ENCODE measurements at regions of chr15 and their contacts with region 1.

Region 1: GRCh38 chr15:74540761-74541493 is at the start of gene ARID3B:
- DNase-seq: peak; percentile 99
- H3K4me3 Mint-ChIP-seq: peak within 1 kb of the TSS; percentile 97
- H3K27ac Mint-ChIP-seq: peak within 1 kb of the TSS; percentile 90
- H3K4me1 Mint-ChIP-seq: peaks cover 46% of the 10 kb centered on the region
- H3K27me3 Mint-ChIP-seq: no peaks in the 10 kb centered on the region
- total RNA-seq, gene ARID3B: 14.2 to 15.9 TPM

Region 2: GRCh38 chr15:73991726-73992593 is 549.0 kb before region 1 on chr15 and contains the start of gene STOML1:
- CTCF ChIA-PET with region 1: no interaction called
- intact Hi-C with region 1: loop called (anchors 1 kb)
- DNase-seq: peak; percentile 95
- H3K4me3 Mint-ChIP-seq: peak within 1 kb of the TSS; percentile 95
- H3K27ac Mint-ChIP-seq: peak within 1 kb of the TSS; percentile 83
- H3K4me1 Mint-ChIP-seq: peaks cover 49% of the 10 kb centered on the region
- H3K27me3 Mint-ChIP-seq: no peaks in the 10 kb centered on the region
- total RNA-seq, gene STOML1: 8.7 to 9.5 TPM

Region 3: DNA sequence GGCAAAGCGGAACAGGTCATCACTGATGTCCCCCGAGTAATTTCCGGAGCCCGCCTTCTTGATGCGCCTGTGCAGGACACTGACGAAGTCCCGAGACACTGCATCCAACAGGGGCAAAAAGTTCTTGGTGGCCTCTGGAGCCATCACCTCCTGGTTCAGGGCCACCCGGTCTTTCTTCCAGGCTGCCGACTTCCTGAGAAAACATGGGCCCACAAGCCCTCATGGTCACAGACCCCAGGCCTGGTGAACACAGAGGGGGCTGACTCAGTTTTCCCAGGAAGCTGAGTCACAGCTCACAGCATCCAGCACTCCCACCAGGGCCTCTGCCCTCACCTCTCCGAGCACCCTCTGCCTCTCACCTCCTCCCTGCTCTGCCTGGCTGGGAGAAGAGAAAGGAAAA is 195.9 kb before region 1 on chr15:
- CTCF ChIA-PET with region 1: no interaction called
- intact Hi-C with region 1: no loop called
- DNase-seq: no peak
- H3K4me3 Mint-ChIP-seq: no peak overlapping the region
- H3K27ac Mint-ChIP-seq: no peak overlapping the region
- H3K4me1 Mint-ChIP-seq: peaks cover 2% of the 10 kb centered on the region
- H3K27me3 Mint-ChIP-seq: no peaks in the 10 kb centered on the region

Region 4: DNA sequence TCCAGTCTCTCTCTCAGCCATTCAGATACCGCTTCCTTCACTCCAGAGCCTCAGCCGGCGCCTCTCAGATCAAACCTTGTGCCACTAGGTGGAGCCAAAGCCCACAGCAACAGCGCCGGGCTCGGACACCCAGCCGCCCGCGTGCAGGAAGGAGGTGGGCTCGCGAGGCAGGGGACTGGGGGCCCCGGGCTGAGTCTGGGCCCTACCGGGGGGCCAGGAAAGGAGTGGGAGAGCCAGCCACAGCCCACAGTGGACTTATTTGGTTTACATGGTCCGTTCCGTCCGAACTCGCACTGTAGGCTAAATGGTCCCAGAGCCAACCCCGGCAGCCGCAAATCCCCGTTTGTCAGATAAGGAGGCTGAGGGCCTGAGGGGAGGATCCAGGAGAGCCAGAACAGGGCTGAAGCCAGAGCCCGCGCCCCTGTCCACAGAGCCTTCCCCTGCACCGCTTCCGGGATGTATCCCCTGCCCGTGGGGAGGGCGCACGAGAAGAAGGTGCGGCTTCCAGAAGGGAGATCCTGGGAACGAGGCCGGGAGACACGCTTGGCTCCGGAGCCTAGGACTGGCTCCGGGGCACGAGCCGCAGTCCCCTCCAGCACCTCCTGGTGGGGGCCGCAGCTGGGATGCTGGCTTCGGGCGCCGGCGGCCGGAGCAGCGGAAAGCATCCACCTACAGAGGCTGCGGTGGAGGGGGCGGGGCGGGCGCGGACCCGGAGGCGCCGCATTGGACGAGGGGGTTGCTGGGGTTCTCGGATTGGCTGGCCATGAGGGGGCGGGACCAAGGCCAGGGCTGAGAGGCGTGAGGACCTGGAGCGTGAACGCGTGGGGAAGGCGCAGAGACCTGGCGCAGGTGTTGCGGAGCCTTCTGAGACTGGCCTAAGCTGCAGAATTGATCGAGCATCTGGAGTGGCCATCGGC is 166.9 kb before region 1 on chr15:
- CTCF ChIA-PET with region 1: interaction called, 3 read pairs
- intact Hi-C with region 1: loop called (anchors 1 kb)
- DNase-seq: peak; percentile 97
- H3K4me3 Mint-ChIP-seq: peak overlapping the region; percentile 75
- H3K27ac Mint-ChIP-seq: no peak overlapping the region
- H3K4me1 Mint-ChIP-seq: peaks cover 31% of the 10 kb centered on the region
- H3K27me3 Mint-ChIP-seq: peaks cover 1% of the 10 kb centered on the region

Region 5: DNA sequence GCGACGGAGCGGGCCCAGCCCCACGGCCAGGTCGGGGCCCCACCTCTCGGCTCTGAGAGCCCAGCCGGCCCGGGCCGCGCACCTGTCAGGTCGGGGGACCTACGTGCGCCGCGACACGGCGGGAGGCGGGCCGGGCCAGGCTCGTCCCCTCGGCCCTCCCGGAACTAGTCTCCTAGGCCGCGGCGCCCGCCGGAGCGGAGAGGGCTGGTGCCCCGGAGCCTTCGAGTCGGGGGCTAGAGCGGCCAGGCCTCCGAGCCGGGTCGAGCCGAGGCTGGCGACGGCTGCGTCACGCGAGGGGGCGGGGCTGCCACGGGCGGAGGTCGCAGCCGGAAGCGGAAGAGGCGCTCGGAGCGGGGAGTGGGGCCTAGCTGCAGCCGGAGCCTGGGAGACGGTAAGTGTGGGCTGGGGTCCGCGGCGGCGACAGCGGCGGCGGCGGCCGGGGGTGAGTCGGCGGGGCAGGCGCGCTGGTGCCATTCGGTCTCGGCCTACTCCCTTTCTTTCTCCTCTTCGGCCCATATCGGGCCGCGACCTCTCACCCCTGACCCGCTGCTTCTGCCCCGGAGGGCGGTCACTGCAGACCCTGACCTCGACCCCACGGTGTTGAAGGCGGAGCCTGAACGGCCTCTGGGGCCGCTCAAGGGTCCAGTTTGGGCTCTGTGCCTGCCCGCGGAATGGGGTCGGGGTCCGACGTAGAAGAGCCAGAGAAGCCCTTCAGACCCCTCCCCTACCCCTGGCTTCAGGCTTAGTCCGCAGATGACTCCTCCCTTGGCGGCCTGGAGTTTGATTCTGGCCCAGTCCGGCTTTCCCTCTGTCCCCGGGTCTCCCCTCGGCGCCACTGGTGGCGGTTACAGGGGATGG is 74.8 kb after region 1 on chr15 and contains the start of gene CLK3:
- CTCF ChIA-PET with region 1: interaction called, 7 read pairs
- intact Hi-C with region 1: loop called (anchors 1 kb)
- DNase-seq: peak; percentile 97
- H3K4me3 Mint-ChIP-seq: peak within 1 kb of the TSS; percentile 90
- H3K27ac Mint-ChIP-seq: peak within 1 kb of the TSS; percentile 95
- H3K4me1 Mint-ChIP-seq: peaks cover 39% of the 10 kb centered on the region
- H3K27me3 Mint-ChIP-seq: no peaks in the 10 kb centered on the region
- total RNA-seq, gene CLK3: 124 TPM

Region 6: GRCh38 chr15:74709011-74709410 is 168.1 kb after region 1 on chr15:
- CTCF ChIA-PET with region 1: no interaction called
- intact Hi-C with region 1: no loop called
- DNase-seq: no peak
- H3K4me3 Mint-ChIP-seq: no peak overlapping the region
- H3K27ac Mint-ChIP-seq: no peak overlapping the region
- H3K4me1 Mint-ChIP-seq: peaks cover 2% of the 10 kb centered on the region
- H3K27me3 Mint-ChIP-seq: no peaks in the 10 kb centered on the region

Region 7: DNA sequence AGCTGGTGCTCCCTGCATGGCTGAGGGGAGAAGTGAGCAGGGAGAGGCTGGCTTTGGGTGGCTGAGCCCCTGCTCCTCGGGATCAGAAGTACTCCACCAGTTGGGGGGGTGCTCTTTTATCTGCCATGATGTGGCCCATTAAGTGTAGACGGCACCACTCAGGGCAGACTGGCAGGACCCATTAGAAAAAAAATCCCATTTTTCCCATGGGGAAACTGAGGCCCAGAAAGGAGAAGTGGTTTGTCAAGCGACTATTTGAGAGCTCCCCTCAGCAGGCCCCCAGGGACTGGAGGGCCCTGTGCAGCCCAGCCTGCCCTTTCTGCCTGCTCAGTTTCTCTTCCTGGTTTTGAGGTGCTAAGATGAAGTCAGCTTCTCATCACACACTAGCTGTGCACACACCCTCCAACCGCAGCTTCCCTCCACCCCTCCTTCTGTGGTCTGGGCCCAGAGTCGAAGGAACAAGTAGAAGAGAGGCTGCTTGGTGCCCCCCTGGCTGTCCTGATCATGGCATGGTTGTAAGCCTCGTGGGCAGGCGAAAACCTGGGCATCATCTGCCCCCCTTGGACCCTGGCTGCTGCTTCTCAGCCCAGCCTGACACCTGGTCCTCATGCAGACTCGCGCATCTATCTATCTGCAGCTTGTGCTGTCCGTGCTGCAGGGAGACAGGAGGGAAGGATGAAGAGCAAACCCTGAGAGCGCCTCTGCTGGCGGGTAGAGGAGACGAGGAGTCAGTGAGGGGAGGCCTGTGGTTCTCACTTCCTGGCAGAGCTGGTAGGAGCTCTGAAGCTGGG is 246.5 kb after region 1 on chr15:
- CTCF ChIA-PET with region 1: no interaction called
- intact Hi-C with region 1: loop called (anchors 5 kb)
- DNase-seq: peak; percentile 98
- H3K4me3 Mint-ChIP-seq: peak overlapping the region; percentile 93
- H3K27ac Mint-ChIP-seq: peak overlapping the region; percentile 99
- H3K4me1 Mint-ChIP-seq: peaks cover 55% of the 10 kb centered on the region
- H3K27me3 Mint-ChIP-seq: no peaks in the 10 kb centered on the region

Region 8: GRCh38 chr15:74937596-74938296 is 396.8 kb after region 1 on chr15 and contains the start of gene COX5A:
- CTCF ChIA-PET with region 1: no interaction called
- intact Hi-C with region 1: loop called (anchors 5 kb)
- DNase-seq: peak; percentile 95
- H3K4me3 Mint-ChIP-seq: peak within 1 kb of the TSS; percentile 90
- H3K27ac Mint-ChIP-seq: peak within 1 kb of the TSS; percentile 89
- H3K4me1 Mint-ChIP-seq: peaks cover 33% of the 10 kb centered on the region
- H3K27me3 Mint-ChIP-seq: no peaks in the 10 kb centered on the region
- total RNA-seq, gene COX5A: 346 to 348 TPM